ENCODE measurements at regions of chr1 and their contacts with region 1.

Region 1: GRCh38 chr1:102550729-102551384 is 554.1 kb upstream of the OLFM3 start:
- DNase-seq: peak; percentile 74
- H3K4me3 ChIP-seq: no peak overlapping the region
- H3K27ac ChIP-seq: no peak overlapping the region
- H3K4me1 ChIP-seq: no peaks in the 10 kb centered on the region
- H3K27me3 ChIP-seq: no peaks in the 10 kb centered on the region
- CTCF ChIP-seq: peak; percentile 66

Region 2: GRCh38 chr1:102434421-102434820 is 116.4 kb before region 1 on chr1:
- CTCF ChIA-PET with region 1: no interaction called
- POLR2A ChIA-PET with region 1: no interaction called
- intact Hi-C with region 1: no loop called
- DNase-seq: peak; percentile 76
- H3K4me3 ChIP-seq: no peak overlapping the region
- H3K27ac ChIP-seq: no peak overlapping the region
- H3K4me1 ChIP-seq: no peaks in the 10 kb centered on the region
- H3K27me3 ChIP-seq: no peaks in the 10 kb centered on the region
- CTCF ChIP-seq: peak; percentile 81

Region 3: DNA sequence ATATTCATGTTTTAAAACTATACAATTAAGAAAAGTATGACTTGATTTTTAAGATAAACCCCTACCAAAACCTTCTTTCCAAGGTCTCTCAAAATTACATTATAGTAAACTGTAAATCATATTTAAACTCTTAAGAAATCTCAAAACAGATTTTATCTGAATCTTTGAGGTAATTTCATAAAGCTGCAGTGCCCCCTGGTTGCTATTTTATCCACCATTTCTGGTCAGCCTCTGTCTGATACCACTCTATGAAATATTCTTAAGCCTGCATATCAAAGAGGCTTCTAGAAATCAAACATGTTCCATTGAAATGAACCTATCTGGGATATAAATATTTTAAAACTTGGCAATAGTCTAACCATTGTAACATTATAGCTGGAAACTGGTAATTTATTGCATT is 240.1 kb after region 1 on chr1:
- CTCF ChIA-PET with region 1: no interaction called
- POLR2A ChIA-PET with region 1: no interaction called
- intact Hi-C with region 1: loop called (anchors 10 kb)
- DNase-seq: peak; percentile 37
- H3K4me3 ChIP-seq: no peak overlapping the region
- H3K27ac ChIP-seq: no peak overlapping the region
- H3K4me1 ChIP-seq: no peaks in the 10 kb centered on the region
- H3K27me3 ChIP-seq: no peaks in the 10 kb centered on the region
- CTCF ChIP-seq: peak; percentile 58

Region 4: GRCh38 chr1:102970498-102971078 is 419.7 kb after region 1 on chr1:
- CTCF ChIA-PET with region 1: no interaction called
- POLR2A ChIA-PET with region 1: no interaction called
- intact Hi-C with region 1: loop called (anchors 2 kb)
- DNase-seq: peak; percentile 82
- H3K4me3 ChIP-seq: no peak overlapping the region
- H3K27ac ChIP-seq: no peak overlapping the region
- H3K4me1 ChIP-seq: no peaks in the 10 kb centered on the region
- H3K27me3 ChIP-seq: no peaks in the 10 kb centered on the region
- CTCF ChIP-seq: peak; percentile 76

Measured in A673 (cell line).